Tibial artery (tissue), 4 donors: ENCODE measurements at regions of chr20 and their contacts with region 1.

Region 1: DNA sequence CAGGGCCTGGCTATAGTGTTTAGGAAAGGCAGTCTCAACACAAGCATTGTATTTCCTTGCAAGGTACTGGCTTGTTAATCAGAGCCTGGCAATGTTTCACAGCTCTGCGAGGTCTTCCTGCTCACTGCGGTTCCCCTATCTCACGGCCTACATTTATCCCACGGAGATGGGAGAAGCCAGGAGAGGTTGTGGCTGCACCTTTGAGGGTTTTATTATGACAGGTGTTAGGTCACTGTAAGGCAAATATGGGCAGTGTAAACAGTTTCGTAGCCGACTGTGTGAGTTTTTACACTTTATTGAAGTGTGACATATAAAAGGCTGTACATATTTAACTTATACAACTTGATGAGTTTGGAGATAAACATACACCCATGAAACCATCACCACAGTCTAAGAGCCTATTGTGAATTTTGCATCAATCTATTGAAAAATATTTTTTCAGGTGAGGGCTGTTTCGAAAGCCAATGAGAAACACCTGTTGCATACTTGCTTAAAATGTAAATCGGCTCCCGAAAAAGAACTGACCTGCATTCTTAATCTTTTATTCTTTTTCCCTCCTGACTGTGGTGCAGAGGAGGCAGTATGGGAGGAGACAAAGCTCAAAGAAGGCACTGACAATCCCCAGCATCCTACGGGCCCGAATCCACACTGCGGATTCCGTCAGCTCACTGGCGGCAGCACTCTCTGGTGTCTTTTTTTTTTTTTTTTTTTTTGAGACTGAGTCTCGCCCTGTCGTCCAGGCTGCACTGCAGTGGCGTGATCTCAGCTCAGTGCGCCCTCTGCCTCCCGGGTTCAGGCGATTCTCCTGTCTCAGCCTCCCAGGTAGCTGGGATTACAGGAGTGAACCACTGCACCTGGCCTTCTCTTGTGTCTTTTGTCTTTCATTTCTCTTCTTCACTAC is 7.5 kb upstream of the RBM38 start:
- DNase-seq: no peak
- H3K4me3 ChIP-seq: no peak overlapping the region
- H3K27ac ChIP-seq: no peak overlapping the region
- H3K4me1 ChIP-seq: peaks cover 0 to under 1% (median 0%) of the 10 kb centered on the region in 4 donors
- H3K27me3 ChIP-seq: no peaks in the 10 kb centered on the region
- CTCF ChIP-seq: no peak

Region 2: DNA sequence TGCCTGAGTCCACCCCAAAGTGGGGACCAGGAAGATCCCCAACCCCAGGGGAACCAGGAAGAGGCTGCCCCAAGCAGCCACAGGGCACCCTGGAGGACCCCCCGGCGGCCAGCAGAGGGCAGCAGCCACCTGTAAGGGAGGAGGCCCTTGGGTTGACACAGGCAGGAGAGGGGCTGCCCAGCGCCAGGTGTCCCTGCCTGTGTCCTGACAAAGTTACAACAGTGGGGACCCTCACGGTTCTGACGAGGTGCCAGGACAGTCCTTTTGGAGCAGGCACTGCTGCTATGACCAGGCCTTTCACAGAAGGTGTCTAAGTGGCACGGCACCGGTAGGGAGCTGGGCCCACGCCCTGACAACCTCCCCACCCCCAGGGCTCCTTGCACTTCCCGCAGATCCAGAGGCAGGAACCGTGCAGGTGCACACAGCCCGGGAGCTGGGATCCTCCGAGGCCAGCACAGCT is 294.0 kb before region 1 on chr20:
- intact Hi-C with region 1: no loop called
- DNase-seq: no peak
- H3K4me3 ChIP-seq: no peak overlapping the region
- H3K27ac ChIP-seq: no peak overlapping the region
- H3K4me1 ChIP-seq: peaks cover 0 to 12% (median 0%) of the 10 kb centered on the region in 4 donors
- H3K27me3 ChIP-seq: peaks cover 0 to 46% of the 10 kb centered on the region in 2 donors
- CTCF ChIP-seq: peak; percentile 40 to 49

Region 3: DNA sequence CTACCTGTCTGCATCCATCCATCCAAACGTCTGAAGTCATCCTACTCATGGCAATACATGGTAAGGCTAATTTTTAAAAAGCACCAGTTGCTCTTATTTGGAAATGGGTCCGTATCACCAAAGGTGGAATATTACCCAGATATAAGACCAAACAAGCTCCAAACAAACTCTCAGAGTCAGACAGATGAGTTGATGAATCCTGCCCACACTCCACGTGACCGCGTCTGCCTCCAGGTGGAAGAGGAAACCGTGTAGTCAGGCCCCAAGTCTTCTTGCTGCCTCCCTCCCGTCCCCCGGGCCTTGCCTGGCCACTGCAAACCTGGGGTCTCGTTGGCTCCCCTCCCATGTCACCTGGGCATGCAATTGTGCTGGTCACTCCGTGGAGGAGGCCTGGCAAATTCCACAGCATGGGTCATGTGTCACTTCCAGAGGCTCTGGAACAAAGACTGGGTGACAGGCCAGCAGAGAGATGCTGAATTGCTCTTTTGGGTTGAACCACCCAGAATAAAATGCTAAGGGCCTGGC is 109.5 kb after region 1 on chr20:
- intact Hi-C with region 1: loop called (anchors 1 kb)
- DNase-seq: peak in 1 of 2 donors; percentile 47
- H3K4me3 ChIP-seq: no peak overlapping the region
- H3K27ac ChIP-seq: no peak overlapping the region
- H3K4me1 ChIP-seq: peaks cover 0 to 13% (median 8%) of the 10 kb centered on the region in 4 donors
- H3K27me3 ChIP-seq: no peaks in the 10 kb centered on the region
- CTCF ChIP-seq: no peak